CD8-positive, alpha-beta T cell (primary cell): ENCODE measurements at regions of chr11 and their contacts with region 1.

Region 1: GRCh38 chr11:57741132-57742086 is at the start of gene SELENOH:
- DNase-seq: peak; percentile 83 to 97 (median 91)
- ATAC-seq: peak; percentile 85
- H3K4me3 ChIP-seq: peak within 1 kb of the TSS; percentile 90 to 97
- H3K4me3 Mint-ChIP-seq: peak within 1 kb of the TSS; percentile 92
- H3K27ac ChIP-seq: peak within 1 kb of the TSS; percentile 97
- H3K27ac Mint-ChIP-seq: peak within 1 kb of the TSS; percentile 98
- H3K4me1 ChIP-seq: peaks cover 34% of the 10 kb centered on the region
- H3K4me1 Mint-ChIP-seq: peaks cover 41% of the 10 kb centered on the region
- H3K27me3 ChIP-seq: no peaks in the 10 kb centered on the region
- H3K27me3 Mint-ChIP-seq: no peaks in the 10 kb centered on the region
- CTCF ChIP-seq: no peak
- total RNA-seq, gene SELENOH: 40.8 to 44.1 TPM

Region 2: DNA sequence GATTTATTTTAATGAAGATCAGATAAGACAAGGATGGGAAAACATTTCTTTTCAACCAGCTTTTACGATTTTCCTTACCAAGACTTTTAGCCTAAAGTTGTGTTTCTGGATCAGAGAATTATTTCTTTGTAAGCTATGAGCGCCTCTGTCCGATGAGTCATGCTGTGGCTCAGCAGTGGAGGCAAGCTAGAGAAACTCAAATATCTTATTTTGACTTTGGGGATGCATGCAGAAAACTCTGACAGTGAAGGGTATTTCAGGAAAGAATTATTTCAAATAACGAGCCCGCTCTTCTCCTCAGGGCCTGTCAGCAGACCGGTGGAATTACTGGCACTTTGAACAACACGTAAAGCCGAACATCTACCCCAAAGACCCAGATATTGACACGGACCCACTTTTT is 830.6 kb before region 1 on chr11:
- CTCF ChIA-PET with region 1: no interaction called
- POLR2A ChIA-PET with region 1: no interaction called
- intact Hi-C with region 1: no loop called
- DNase-seq: no peak
- ATAC-seq: no peak
- H3K4me3 ChIP-seq: no peak overlapping the region
- H3K4me3 Mint-ChIP-seq: no peak overlapping the region
- H3K27ac ChIP-seq: no peak overlapping the region
- H3K27ac Mint-ChIP-seq: no peak overlapping the region
- H3K4me1 ChIP-seq: no peaks in the 10 kb centered on the region
- H3K4me1 Mint-ChIP-seq: no peaks in the 10 kb centered on the region
- H3K27me3 ChIP-seq: no peaks in the 10 kb centered on the region
- H3K27me3 Mint-ChIP-seq: no peaks in the 10 kb centered on the region
- CTCF ChIP-seq: no peak

Region 3: GRCh38 chr11:57335343-57336110 is 405.9 kb before region 1 on chr11 and contains the start of gene SSRP1:
- CTCF ChIA-PET with region 1: no interaction called
- POLR2A ChIA-PET with region 1: interaction called, 3 read pairs
- intact Hi-C with region 1: loop called (anchors 1 to 5 kb)
- DNase-seq: peak; percentile 70 to 95 (median 86)
- ATAC-seq: peak; percentile 96
- H3K4me3 ChIP-seq: peak within 1 kb of the TSS; percentile 78 to 82
- H3K4me3 Mint-ChIP-seq: peak within 1 kb of the TSS; percentile 86
- H3K27ac ChIP-seq: peak within 1 kb of the TSS; percentile 83 to 91
- H3K27ac Mint-ChIP-seq: peak within 1 kb of the TSS; percentile 94
- H3K4me1 ChIP-seq: peaks cover 23% of the 10 kb centered on the region
- H3K4me1 Mint-ChIP-seq: peaks cover 33% of the 10 kb centered on the region
- H3K27me3 ChIP-seq: no peaks in the 10 kb centered on the region
- H3K27me3 Mint-ChIP-seq: no peaks in the 10 kb centered on the region
- CTCF ChIP-seq: no peak
- total RNA-seq, gene SSRP1: 34.3 to 36.3 TPM

Region 4: DNA sequence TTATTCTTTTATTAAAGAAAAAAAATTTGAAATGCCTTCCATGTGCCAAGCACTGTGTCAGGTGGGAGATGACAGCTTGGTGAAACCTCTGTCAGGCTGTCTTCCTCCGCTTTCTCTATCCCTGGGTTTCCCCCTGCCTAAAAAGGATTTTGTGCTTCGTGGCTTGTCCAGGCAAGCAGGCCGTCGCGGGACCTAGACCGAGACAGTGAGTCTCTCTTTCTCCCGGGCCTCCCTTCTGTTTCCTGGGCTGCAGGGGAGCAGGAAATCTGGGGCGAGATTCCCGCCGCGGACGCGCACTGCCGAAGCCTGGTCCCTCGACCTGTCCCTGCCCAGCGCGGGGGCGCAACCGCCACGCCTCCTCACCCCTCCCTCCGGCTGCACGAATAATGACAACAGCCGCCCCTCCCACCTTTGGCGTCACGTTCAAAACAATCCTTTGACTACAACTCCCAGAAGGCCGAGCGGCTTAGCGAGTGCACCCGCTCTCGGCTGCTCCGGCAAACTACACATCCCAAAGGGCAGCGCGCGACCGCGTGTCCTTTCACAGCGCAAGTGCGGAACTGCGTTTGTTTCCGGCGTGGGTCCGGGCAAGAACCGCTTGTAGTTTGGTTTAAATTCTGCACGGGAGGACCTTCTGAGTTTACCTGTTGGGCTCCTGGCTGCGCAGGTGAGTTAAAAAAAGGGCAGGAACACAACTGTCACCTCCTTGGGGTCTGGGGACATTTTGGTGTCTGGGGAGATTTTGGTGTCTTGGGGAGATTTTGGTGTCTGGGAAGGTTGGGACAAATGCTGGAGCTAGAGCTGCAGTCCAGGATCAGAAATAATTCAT is 84.0 kb before region 1 on chr11 and contains the start of gene CLP1:
- CTCF ChIA-PET with region 1: no interaction called
- POLR2A ChIA-PET with region 1: interaction called, 8 read pairs
- intact Hi-C with region 1: loop called in 1 of 2 experiments (anchors 2 kb)
- DNase-seq: peak; percentile 97 to 100 (median 99)
- ATAC-seq: peak; percentile 94
- H3K4me3 ChIP-seq: peak within 1 kb of the TSS; percentile 59 to 74
- H3K4me3 Mint-ChIP-seq: peak within 1 kb of the TSS; percentile 94
- H3K27ac ChIP-seq: peak within 1 kb of the TSS; percentile 83
- H3K27ac Mint-ChIP-seq: peak within 1 kb of the TSS; percentile 90
- H3K4me1 ChIP-seq: peaks cover 11% of the 10 kb centered on the region
- H3K4me1 Mint-ChIP-seq: peaks cover 43% of the 10 kb centered on the region
- H3K27me3 ChIP-seq: no peaks in the 10 kb centered on the region
- H3K27me3 Mint-ChIP-seq: no peaks in the 10 kb centered on the region
- CTCF ChIP-seq: no peak
- total RNA-seq, gene CLP1: 22.7 to 27.1 TPM

Region 5: DNA sequence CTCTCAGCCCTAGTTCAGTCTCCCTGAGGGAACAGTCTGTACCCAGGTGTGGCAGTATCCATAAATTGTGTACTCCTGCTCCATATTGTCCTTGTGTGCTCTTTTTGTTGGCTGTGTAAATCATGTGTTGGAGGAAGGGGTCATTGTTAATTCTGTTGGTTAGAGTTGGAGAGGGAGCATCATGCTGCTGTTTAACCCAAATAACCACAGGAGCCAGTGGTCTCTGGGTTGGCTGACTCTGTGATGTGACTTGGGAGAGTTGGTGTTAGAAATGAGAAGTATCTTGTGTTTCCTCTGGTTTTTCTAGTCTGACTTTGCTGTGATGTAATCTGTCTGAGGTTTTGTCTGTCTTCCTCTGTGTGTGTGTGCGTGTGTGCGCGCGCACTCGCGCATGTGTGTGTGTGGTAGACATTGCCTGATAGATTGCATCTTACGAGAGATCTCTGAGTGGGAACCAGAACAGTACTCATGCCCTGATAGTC is 50.7 kb after region 1 on chr11:
- CTCF ChIA-PET with region 1: no interaction called
- POLR2A ChIA-PET with region 1: interaction called, 5 read pairs
- intact Hi-C with region 1: loop called (anchors 1 to 2 kb)
- DNase-seq: peak; percentile 78 to 95 (median 86)
- ATAC-seq: peak; percentile 95
- H3K4me3 ChIP-seq: peak overlapping the region in 1 of 2 experiments; percentile 21
- H3K4me3 Mint-ChIP-seq: peak overlapping the region; percentile 55
- H3K27ac ChIP-seq: peak overlapping the region; percentile 42 to 60
- H3K27ac Mint-ChIP-seq: peak overlapping the region; percentile 98
- H3K4me1 ChIP-seq: peaks cover 33% of the 10 kb centered on the region
- H3K4me1 Mint-ChIP-seq: peaks cover 36% of the 10 kb centered on the region
- H3K27me3 ChIP-seq: no peaks in the 10 kb centered on the region
- H3K27me3 Mint-ChIP-seq: no peaks in the 10 kb centered on the region
- CTCF ChIP-seq: no peak

Region 6: GRCh38 chr11:57842873-57843272 is 101.5 kb after region 1 on chr11:
- CTCF ChIA-PET with region 1: no interaction called
- POLR2A ChIA-PET with region 1: no interaction called
- intact Hi-C with region 1: no loop called
- DNase-seq: no peak
- ATAC-seq: no peak
- H3K4me3 ChIP-seq: no peak overlapping the region
- H3K4me3 Mint-ChIP-seq: no peak overlapping the region
- H3K27ac ChIP-seq: no peak overlapping the region
- H3K27ac Mint-ChIP-seq: no peak overlapping the region
- H3K4me1 ChIP-seq: no peaks in the 10 kb centered on the region
- H3K4me1 Mint-ChIP-seq: no peaks in the 10 kb centered on the region
- H3K27me3 ChIP-seq: no peaks in the 10 kb centered on the region
- H3K27me3 Mint-ChIP-seq: peaks cover 11% of the 10 kb centered on the region
- CTCF ChIP-seq: no peak

Region 7: DNA sequence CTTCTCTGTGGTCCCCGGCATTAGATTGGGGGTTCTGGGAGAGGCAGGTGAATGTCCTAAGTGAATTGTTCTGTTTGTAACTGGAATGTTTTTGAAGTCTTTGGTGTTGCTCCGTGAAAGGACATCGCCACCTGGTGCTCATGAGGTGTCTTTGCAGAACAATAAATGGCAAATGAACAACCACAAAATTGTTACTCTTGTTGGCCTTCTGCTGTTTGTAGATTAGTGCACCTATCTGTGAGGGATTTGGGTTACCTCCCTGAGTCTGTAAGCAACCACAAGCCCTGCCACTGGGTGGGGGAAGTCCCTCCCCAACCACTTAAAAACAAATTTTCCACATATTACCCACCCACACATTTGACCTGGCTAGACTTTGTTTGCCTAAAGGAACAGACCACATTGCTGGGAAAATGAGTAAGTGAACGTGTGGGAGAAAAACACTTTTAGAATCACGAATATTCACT is 1466.6 kb after region 1 on chr11:
- CTCF ChIA-PET with region 1: no interaction called
- POLR2A ChIA-PET with region 1: no interaction called
- intact Hi-C with region 1: no loop called
- DNase-seq: peak in 8 of 9 experiments; percentile 9 to 72 (median 34)
- ATAC-seq: peak; percentile 69
- H3K4me3 ChIP-seq: no peak overlapping the region
- H3K4me3 Mint-ChIP-seq: peak overlapping the region; percentile 19
- H3K27ac ChIP-seq: no peak overlapping the region
- H3K27ac Mint-ChIP-seq: no peak overlapping the region
- H3K4me1 ChIP-seq: peaks cover 15% of the 10 kb centered on the region
- H3K4me1 Mint-ChIP-seq: peaks cover 16% of the 10 kb centered on the region
- H3K27me3 ChIP-seq: peaks cover 0 to 3% of the 10 kb centered on the region in 2 experiments
- H3K27me3 Mint-ChIP-seq: peaks cover 5% of the 10 kb centered on the region
- CTCF ChIP-seq: peak; percentile 49

Region 8: GRCh38 chr11:59550368-59550841 is 1809.0 kb after region 1 on chr11:
- CTCF ChIA-PET with region 1: no interaction called
- POLR2A ChIA-PET with region 1: no interaction called
- intact Hi-C with region 1: loop called in 1 of 2 experiments (anchors 10 kb)
- DNase-seq: peak; percentile 68 to 93 (median 79)
- ATAC-seq: peak; percentile 85
- H3K4me3 ChIP-seq: peak overlapping the region; percentile 62 to 67
- H3K4me3 Mint-ChIP-seq: peak overlapping the region; percentile 77
- H3K27ac ChIP-seq: peak overlapping the region; percentile 36 to 48
- H3K27ac Mint-ChIP-seq: peak overlapping the region; percentile 87
- H3K4me1 ChIP-seq: peaks cover 10% of the 10 kb centered on the region
- H3K4me1 Mint-ChIP-seq: peaks cover 23% of the 10 kb centered on the region
- H3K27me3 ChIP-seq: no peaks in the 10 kb centered on the region
- H3K27me3 Mint-ChIP-seq: no peaks in the 10 kb centered on the region
- CTCF ChIP-seq: no peak